Naive thymus-derived CD4-positive, alpha-beta T cell (primary cell): ENCODE measurements at regions of chr6 and their contacts with region 1.

Region 1: GRCh38 chr6:157021344-157021992 is 244.3 kb downstream of the ARID1B start:
- DNase-seq: peak; percentile 85 to 93 (median 91)
- ATAC-seq: peak; percentile 90
- H3K4me3 ChIP-seq: peak overlapping the region; percentile 79
- H3K4me3 Mint-ChIP-seq: peak overlapping the region; percentile 76 to 98 (median 95)
- H3K27ac ChIP-seq: peak overlapping the region; percentile 100
- H3K27ac Mint-ChIP-seq: peak overlapping the region; percentile 86 to 100 (median 99)
- H3K4me1 ChIP-seq: peaks cover 5 to 21% of the 10 kb centered on the region in 2 donors
- H3K4me1 Mint-ChIP-seq: peaks cover 32 to 82% (median 64%) of the 10 kb centered on the region in 7 donors
- H3K27me3 ChIP-seq: no peaks in the 10 kb centered on the region
- H3K27me3 Mint-ChIP-seq: no peaks in the 10 kb centered on the region

Region 2: DNA sequence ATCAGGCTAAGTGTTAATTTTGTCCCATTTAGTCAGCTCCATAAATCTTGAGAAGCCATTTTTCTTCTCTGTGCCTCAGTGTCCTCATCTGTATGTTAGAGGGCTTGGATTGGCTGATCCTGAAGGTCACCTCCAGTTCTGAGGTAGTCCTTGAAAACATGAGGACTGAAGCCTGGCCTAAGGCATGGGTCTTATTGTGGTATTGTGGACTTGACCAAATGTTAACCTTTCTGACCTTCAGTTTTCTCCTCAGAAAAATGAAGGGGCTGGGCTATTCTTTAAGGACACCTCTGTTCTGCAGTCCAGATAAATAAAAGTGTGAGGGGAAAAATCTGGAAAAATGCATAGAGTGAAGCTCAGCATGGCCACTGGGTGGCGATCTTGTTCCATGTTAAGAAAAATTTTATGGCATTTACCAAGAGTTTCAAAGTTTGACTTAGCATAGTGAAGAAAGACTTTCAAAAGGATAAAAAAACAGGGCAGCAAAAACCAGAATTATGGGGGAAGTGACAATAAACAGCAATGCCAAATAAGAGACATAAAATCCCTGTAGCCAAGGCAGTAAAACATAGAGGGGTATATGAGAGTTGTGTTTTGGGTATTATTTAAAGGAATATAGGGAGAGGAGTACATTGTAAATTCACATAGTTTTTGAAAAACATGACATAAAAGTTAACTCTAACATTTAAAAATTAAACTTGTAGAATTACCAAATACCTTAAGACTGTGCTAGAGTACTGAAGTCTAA is 1694.0 kb before region 1 on chr6:
- CTCF ChIA-PET with region 1: no interaction called
- POLR2A ChIA-PET with region 1: no interaction called
- intact Hi-C with region 1: loop called in 1 of 2 experiments (anchors 5 kb)
- DNase-seq: peak; percentile 34 to 76 (median 66)
- ATAC-seq: peak; percentile 80
- H3K4me3 ChIP-seq: no peak overlapping the region
- H3K4me3 Mint-ChIP-seq: peak overlapping the region in 6 of 10 donors; percentile 0 to 40 (median 16)
- H3K27ac ChIP-seq: no peak overlapping the region
- H3K27ac Mint-ChIP-seq: peak overlapping the region; percentile 1 to 68 (median 15)
- H3K4me1 ChIP-seq: peaks cover 0 to 16% of the 10 kb centered on the region in 2 donors
- H3K4me1 Mint-ChIP-seq: peaks cover 3 to 21% (median 19%) of the 10 kb centered on the region in 7 donors
- H3K27me3 ChIP-seq: no peaks in the 10 kb centered on the region
- H3K27me3 Mint-ChIP-seq: no peaks in the 10 kb centered on the region

Region 3: GRCh38 chr6:156396068-156396771 is 625.2 kb before region 1 on chr6:
- CTCF ChIA-PET with region 1: no interaction called
- POLR2A ChIA-PET with region 1: interaction called, 16 read pairs
- intact Hi-C with region 1: loop called in 1 of 2 experiments (anchors 1 kb)
- DNase-seq: peak in 7 of 9 donors; percentile 67 to 85 (median 77)
- ATAC-seq: peak; percentile 85
- H3K4me3 ChIP-seq: peak overlapping the region; percentile 14
- H3K4me3 Mint-ChIP-seq: peak overlapping the region; percentile 49 to 95 (median 84)
- H3K27ac ChIP-seq: peak overlapping the region; percentile 85
- H3K27ac Mint-ChIP-seq: peak overlapping the region; percentile 60 to 100 (median 99)
- H3K4me1 ChIP-seq: peaks cover 16 to 67% of the 10 kb centered on the region in 2 donors
- H3K4me1 Mint-ChIP-seq: peaks cover 17 to 99% (median 89%) of the 10 kb centered on the region in 7 donors
- H3K27me3 ChIP-seq: no peaks in the 10 kb centered on the region
- H3K27me3 Mint-ChIP-seq: peaks cover 0 to 40% (median 0%) of the 10 kb centered on the region in 5 donors

Region 4: DNA sequence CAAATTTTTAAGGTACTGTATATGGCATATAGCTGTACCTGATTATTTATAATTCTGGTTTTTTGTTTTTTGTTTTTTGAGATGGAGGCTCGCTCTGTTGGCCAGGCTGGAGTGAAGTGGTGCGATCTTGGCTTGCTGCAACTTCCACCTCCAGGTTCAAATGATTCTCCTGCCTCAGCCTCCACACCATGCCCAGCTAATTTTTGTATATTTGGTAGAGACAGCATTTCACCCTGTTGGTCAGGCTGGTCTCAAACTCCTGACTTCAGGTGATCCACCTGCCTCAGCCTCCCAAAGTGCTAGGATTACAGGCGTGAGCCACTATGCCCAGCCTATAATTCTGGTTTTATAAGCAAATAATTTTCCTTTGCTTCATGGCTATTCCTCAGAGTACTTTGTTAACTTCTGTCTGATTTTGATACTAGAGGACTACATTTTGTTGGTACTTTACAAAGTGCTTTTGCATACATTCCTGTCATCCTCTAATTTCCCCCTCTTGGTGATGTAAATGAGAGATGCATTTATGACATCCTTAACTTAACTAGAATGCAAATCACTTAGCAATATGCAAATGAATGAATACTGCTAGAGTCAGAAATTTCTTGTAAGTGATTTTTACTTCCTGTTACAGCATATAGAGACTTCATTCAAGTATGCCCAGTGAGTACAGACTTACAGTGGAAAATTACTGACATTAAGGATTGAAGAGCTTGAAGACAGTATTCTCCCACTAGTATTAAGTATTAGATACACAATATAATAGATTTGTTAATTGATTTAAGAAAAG is 280.0 kb before region 1 on chr6:
- CTCF ChIA-PET with region 1: no interaction called
- POLR2A ChIA-PET with region 1: no interaction called
- intact Hi-C with region 1: no loop called
- DNase-seq: no peak
- ATAC-seq: no peak
- H3K4me3 ChIP-seq: no peak overlapping the region
- H3K4me3 Mint-ChIP-seq: no peak overlapping the region
- H3K27ac ChIP-seq: no peak overlapping the region
- H3K27ac Mint-ChIP-seq: no peak overlapping the region
- H3K4me1 ChIP-seq: no peaks in the 10 kb centered on the region
- H3K4me1 Mint-ChIP-seq: no peaks in the 10 kb centered on the region
- H3K27me3 ChIP-seq: no peaks in the 10 kb centered on the region
- H3K27me3 Mint-ChIP-seq: peaks cover 0 to 8% (median 0%) of the 10 kb centered on the region in 5 donors

Region 5: GRCh38 chr6:156866220-156867015 is 155.1 kb before region 1 on chr6:
- CTCF ChIA-PET with region 1: no interaction called
- POLR2A ChIA-PET with region 1: interaction called, 3 read pairs
- intact Hi-C with region 1: loop called in 1 of 2 experiments (anchors 5 kb)
- DNase-seq: no peak
- ATAC-seq: no peak
- H3K4me3 ChIP-seq: no peak overlapping the region
- H3K4me3 Mint-ChIP-seq: peak overlapping the region in 7 of 10 donors; percentile 8 to 56 (median 26)
- H3K27ac ChIP-seq: no peak overlapping the region
- H3K27ac Mint-ChIP-seq: peak overlapping the region in 8 of 9 donors; percentile 15 to 79 (median 54)
- H3K4me1 ChIP-seq: peaks cover 0 to 5% of the 10 kb centered on the region in 2 donors
- H3K4me1 Mint-ChIP-seq: peaks cover 39 to 97% (median 90%) of the 10 kb centered on the region in 7 donors
- H3K27me3 ChIP-seq: no peaks in the 10 kb centered on the region
- H3K27me3 Mint-ChIP-seq: no peaks in the 10 kb centered on the region

Region 6: DNA sequence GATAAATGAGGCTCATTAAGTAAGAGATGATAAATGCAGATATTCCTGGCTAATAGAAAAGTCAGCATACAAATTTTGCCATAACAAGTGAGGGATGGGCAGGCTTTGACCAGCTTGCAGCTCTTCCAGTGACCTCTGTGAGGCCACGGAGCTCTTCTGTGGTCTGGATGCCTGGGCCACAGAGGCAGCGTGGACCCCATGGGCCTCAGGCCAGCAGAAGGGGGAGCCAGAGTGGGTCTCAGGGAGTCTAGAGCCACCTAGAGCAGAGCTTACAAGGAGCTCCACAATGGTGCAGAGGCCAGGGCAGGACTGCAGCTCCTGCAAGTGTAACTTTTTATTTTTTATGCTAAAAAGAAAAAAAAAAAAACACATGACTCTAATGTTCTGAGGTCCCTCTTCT is 79.2 kb before region 1 on chr6:
- CTCF ChIA-PET with region 1: no interaction called
- POLR2A ChIA-PET with region 1: no interaction called
- intact Hi-C with region 1: no loop called
- DNase-seq: no peak
- ATAC-seq: no peak
- H3K4me3 ChIP-seq: no peak overlapping the region
- H3K4me3 Mint-ChIP-seq: peak overlapping the region in 1 of 10 donors; percentile 8
- H3K27ac ChIP-seq: no peak overlapping the region
- H3K27ac Mint-ChIP-seq: peak overlapping the region in 1 of 9 donors; percentile 34
- H3K4me1 ChIP-seq: peaks cover 3 to 14% of the 10 kb centered on the region in 2 donors
- H3K4me1 Mint-ChIP-seq: peaks cover 13 to 92% (median 81%) of the 10 kb centered on the region in 7 donors
- H3K27me3 ChIP-seq: no peaks in the 10 kb centered on the region
- H3K27me3 Mint-ChIP-seq: no peaks in the 10 kb centered on the region

Region 7: DNA sequence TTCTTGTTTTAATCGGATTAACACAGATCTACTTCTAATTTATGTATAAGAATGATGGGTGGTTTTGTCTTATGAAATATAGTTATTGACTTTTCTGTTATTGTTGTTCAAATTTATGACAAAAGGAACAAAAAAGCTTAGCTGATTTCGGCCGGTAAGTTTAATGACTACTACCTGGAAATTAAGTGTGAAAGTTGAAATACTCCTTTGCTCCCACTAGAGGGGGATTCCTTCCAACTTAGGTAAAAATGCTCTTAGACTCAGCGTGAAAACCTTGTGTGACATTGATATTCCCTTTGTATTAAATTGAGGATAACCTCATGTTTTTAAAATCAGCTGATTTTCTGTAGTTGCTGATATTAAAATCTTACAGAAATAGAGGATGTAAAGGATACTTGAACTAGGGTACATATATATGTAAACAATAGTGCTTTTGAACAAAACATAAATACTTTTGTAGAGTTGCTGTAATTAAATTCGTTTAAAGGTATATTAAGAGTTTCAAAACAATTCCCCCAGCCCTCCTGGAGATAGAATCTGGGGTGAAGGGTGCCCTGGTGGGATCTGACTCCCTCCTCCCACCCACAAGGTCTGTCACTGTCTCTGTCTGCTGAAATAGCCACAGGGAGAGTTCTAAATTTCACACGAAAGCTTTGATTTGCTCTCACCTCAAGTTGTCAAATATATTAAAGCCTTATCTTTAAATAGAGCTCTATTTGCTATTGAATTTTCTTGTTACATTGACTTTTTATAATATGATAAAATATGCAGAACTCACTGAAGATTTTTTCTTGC is 13.2 kb after region 1 on chr6:
- CTCF ChIA-PET with region 1: interaction called, 5 read pairs
- POLR2A ChIA-PET with region 1: interaction called, 28 read pairs
- intact Hi-C with region 1: loop called (anchors 1 kb)
- DNase-seq: peak in 6 of 9 donors; percentile 43 to 57 (median 52)
- ATAC-seq: peak; percentile 85
- H3K4me3 ChIP-seq: no peak overlapping the region
- H3K4me3 Mint-ChIP-seq: peak overlapping the region; percentile 44 to 99 (median 84)
- H3K27ac ChIP-seq: peak overlapping the region; percentile 77
- H3K27ac Mint-ChIP-seq: peak overlapping the region; percentile 44 to 95 (median 84)
- H3K4me1 ChIP-seq: peaks cover 6 to 20% of the 10 kb centered on the region in 2 donors
- H3K4me1 Mint-ChIP-seq: peaks cover 22 to 38% (median 27%) of the 10 kb centered on the region in 7 donors
- H3K27me3 ChIP-seq: no peaks in the 10 kb centered on the region
- H3K27me3 Mint-ChIP-seq: no peaks in the 10 kb centered on the region